ENCODE measurements at regions of chr3 and their contacts with region 1.

Region 1: GRCh38 chr3:141311496-141312353 is 56.6 kb upstream of the ZBTB38 start:
- DNase-seq: peak; percentile 100
- ATAC-seq: peak; percentile 95
- H3K4me3 Mint-ChIP-seq: peak overlapping the region; percentile 91
- H3K27ac Mint-ChIP-seq: peak overlapping the region; percentile 98
- H3K4me1 Mint-ChIP-seq: peaks cover 44% of the 10 kb centered on the region
- H3K27me3 Mint-ChIP-seq: no peaks in the 10 kb centered on the region

Region 2: GRCh38 chr3:140629357-140630139 is 682.2 kb before region 1 on chr3:
- CTCF ChIA-PET with region 1: no interaction called
- DNase-seq: no peak
- ATAC-seq: no peak
- H3K4me3 Mint-ChIP-seq: no peak overlapping the region
- H3K27ac Mint-ChIP-seq: no peak overlapping the region
- H3K4me1 Mint-ChIP-seq: no peaks in the 10 kb centered on the region
- H3K27me3 Mint-ChIP-seq: no peaks in the 10 kb centered on the region

Region 3: DNA sequence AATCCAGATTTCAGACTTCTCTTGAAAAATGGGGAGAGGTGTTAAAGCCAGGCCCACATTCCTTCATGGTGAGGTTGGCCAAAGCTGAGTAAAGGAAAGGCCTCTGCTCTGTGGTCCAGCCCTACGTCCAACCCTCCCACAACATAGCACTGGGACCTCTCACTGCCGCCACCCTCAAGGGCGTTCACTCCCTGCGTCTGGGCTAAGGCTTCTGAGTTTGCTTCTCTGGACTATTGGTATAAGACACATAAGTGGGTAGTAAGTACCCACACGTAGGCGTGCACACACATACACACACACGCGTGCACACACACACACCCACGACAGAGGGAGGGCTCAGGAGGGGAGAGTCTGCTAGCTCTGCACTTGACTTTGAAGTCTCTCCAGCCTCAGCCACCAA is 160.3 kb before region 1 on chr3:
- CTCF ChIA-PET with region 1: no interaction called
- DNase-seq: no peak
- ATAC-seq: no peak
- H3K4me3 Mint-ChIP-seq: no peak overlapping the region
- H3K27ac Mint-ChIP-seq: no peak overlapping the region
- H3K4me1 Mint-ChIP-seq: peaks cover 13% of the 10 kb centered on the region
- H3K27me3 Mint-ChIP-seq: peaks cover 5% of the 10 kb centered on the region

Region 4: GRCh38 chr3:141231101-141231935 is 80.4 kb before region 1 on chr3 and contains the start of gene PXYLP1:
- CTCF ChIA-PET with region 1: interaction called, 26 read pairs
- DNase-seq: peak; percentile 95
- ATAC-seq: peak; percentile 95
- H3K4me3 Mint-ChIP-seq: peak within 1 kb of the TSS; percentile 73
- H3K27ac Mint-ChIP-seq: peak within 1 kb of the TSS; percentile 98
- H3K4me1 Mint-ChIP-seq: peaks cover 55% of the 10 kb centered on the region
- H3K27me3 Mint-ChIP-seq: no peaks in the 10 kb centered on the region
- total RNA-seq, gene PXYLP1: 10.3 to 18.4 TPM

Region 5: GRCh38 chr3:141323936-141324704 is 12.4 kb after region 1 on chr3:
- CTCF ChIA-PET with region 1: interaction called, 10 read pairs
- DNase-seq: no peak
- ATAC-seq: no peak
- H3K4me3 Mint-ChIP-seq: no peak overlapping the region
- H3K27ac Mint-ChIP-seq: no peak overlapping the region
- H3K4me1 Mint-ChIP-seq: peaks cover 22% of the 10 kb centered on the region
- H3K27me3 Mint-ChIP-seq: no peaks in the 10 kb centered on the region

Region 6: GRCh38 chr3:141346418-141346817 is 34.7 kb after region 1 on chr3:
- CTCF ChIA-PET with region 1: interaction called, 10 read pairs
- DNase-seq: no peak
- ATAC-seq: no peak
- H3K4me3 Mint-ChIP-seq: no peak overlapping the region
- H3K27ac Mint-ChIP-seq: no peak overlapping the region
- H3K4me1 Mint-ChIP-seq: no peaks in the 10 kb centered on the region
- H3K27me3 Mint-ChIP-seq: peaks cover 12% of the 10 kb centered on the region

Region 7: GRCh38 chr3:141402476-141403171 is 90.9 kb after region 1 on chr3:
- CTCF ChIA-PET with region 1: interaction called, 10 read pairs
- DNase-seq: peak; percentile 69
- ATAC-seq: peak; percentile 72
- H3K4me3 Mint-ChIP-seq: peak overlapping the region; percentile 87
- H3K27ac Mint-ChIP-seq: peak overlapping the region; percentile 89
- H3K4me1 Mint-ChIP-seq: peaks cover 63% of the 10 kb centered on the region
- H3K27me3 Mint-ChIP-seq: no peaks in the 10 kb centered on the region

Region 8: GRCh38 chr3:141412087-141412935 is 100.6 kb after region 1 on chr3:
- CTCF ChIA-PET with region 1: interaction called, 13 read pairs
- DNase-seq: peak; percentile 78
- ATAC-seq: peak; percentile 43
- H3K4me3 Mint-ChIP-seq: peak overlapping the region; percentile 75
- H3K27ac Mint-ChIP-seq: peak overlapping the region; percentile 99
- H3K4me1 Mint-ChIP-seq: peaks cover 80% of the 10 kb centered on the region
- H3K27me3 Mint-ChIP-seq: no peaks in the 10 kb centered on the region

Region 9: DNA sequence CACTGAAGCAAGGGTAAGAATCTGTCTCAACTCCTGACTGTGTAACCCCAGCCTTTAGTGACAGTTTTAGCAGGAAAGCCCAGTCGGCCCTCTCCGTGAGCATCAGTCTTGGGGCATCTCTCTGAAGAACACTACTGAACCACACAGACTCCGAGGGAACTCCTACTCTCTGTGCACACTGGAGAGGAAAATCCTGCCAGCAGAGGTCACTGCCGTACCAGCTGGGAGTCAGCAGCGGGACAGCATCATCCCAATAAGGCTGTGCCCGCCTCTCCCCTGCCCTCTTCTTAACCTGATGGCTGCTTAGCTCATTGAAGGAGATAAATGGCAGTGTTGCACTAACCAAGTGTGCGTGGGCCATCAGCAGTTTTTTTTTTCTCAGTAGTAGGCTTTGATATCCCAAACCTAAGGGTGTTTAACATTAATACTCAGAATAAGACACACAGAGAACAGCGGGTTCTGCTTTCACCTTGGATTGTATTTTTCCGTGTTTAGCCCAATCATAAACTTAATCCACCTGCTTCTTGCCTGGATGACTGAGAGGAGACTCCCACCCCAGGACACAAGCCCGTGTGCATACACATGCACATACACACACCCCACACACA is 148.5 kb after region 1 on chr3:
- CTCF ChIA-PET with region 1: interaction called, 334 read pairs
- DNase-seq: peak; percentile 93
- ATAC-seq: peak; percentile 99
- H3K4me3 Mint-ChIP-seq: no peak overlapping the region
- H3K27ac Mint-ChIP-seq: no peak overlapping the region
- H3K4me1 Mint-ChIP-seq: peaks cover 20% of the 10 kb centered on the region
- H3K27me3 Mint-ChIP-seq: no peaks in the 10 kb centered on the region

Measured in activated CD8-positive, alpha-beta memory T cell treated with anti-CD3 and anti-CD28 coated beads, Interleukin-2, amount 10 ng/mL, durations not matched to agents 7 days and 5 days (primary cell).